AG04449 (cell line): ENCODE measurements at regions of chr4 and their contacts with region 1.

Region 1: GRCh38 chr4:26568446-26568994 is 15.4 kb upstream of the TBC1D19 start:
- DNase-seq: peak; percentile 82
- H3K4me3 ChIP-seq: no peak overlapping the region
- CTCF ChIP-seq: no peak

Region 2: DNA sequence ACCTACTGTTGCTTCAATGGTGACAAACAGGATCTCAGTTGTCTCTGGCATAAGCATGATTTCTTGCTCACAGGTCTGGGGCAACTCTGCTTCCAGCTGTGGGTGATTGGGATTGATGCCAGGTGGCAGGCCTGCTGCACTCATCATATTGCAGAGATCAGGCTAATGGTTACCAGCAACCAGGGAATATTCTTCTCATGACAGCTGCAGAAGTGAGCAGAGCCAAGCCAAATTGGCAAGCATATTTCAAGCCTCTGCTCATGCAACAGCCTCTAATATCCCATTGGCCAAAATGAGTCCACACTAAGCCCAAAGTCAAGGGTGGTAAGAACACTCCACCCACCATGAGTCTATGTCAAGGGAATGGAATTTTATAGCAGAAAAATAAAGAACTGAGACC is 11.4 kb before region 1 on chr4:
- CTCF ChIA-PET with region 1: no interaction called
- POLR2A ChIA-PET with region 1: interaction called, 14 read pairs
- DNase-seq: peak; percentile 98
- H3K4me3 ChIP-seq: no peak overlapping the region
- CTCF ChIP-seq: no peak

Region 3: DNA sequence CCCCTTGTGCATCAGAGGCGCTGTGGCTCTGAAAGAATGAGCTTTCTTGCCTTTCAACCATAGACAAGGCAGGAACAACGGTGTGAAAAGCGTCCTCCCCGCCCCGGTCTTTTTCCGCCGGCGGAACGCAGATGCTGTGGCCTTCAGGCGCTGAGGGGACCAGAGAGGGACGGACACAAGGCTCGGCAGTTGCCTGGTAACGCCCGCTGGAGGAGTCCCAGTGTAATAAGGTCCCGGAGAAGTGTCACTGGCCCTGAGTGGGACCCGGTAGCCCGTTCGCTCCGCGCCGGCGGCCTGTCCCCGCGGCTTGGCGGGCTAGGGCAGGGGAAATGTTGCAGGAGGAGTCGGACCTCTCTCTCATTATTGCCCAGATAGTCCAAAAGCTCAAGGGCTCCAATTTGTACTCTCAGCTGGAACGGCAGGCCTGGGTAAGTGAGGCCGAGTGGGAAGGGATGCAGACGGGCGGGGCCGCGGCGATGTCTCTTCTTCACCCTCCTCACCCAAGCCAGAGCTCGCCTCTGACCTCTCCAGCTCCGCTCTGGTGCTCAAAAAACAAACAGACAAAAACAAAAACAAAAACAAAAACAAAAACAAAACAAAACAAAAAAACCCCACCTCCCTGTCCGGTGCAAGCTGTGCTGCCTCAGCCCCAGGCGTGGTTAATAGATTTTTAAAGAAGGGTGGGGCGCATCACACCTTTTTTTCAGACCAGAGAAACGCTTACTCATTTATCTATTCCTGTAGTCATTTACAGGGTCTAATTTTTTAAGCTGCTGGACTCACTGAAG is 15.5 kb after region 1 on chr4 and contains the start of gene TBC1D19:
- CTCF ChIA-PET with region 1: interaction called, 3 read pairs
- POLR2A ChIA-PET with region 1: interaction called, 12 read pairs
- DNase-seq: peak; percentile 40
- H3K4me3 ChIP-seq: peak within 1 kb of the TSS; percentile 83
- CTCF ChIP-seq: no peak